ENCODE measurements at regions of chr17 and their contacts with region 1.

Region 1: GRCh38 chr17:8739097-8739496 is 5.5 kb downstream of the CCDC42 start:
- DNase-seq: no peak
- ATAC-seq: no peak
- H3K4me3 ChIP-seq: no peak overlapping the region
- H3K27ac ChIP-seq: no peak overlapping the region
- H3K4me1 ChIP-seq: no peaks in the 10 kb centered on the region
- H3K27me3 ChIP-seq: no peaks in the 10 kb centered on the region
- CTCF ChIP-seq: no peak
- POLR2A ChIP-seq: no peak

Region 2: DNA sequence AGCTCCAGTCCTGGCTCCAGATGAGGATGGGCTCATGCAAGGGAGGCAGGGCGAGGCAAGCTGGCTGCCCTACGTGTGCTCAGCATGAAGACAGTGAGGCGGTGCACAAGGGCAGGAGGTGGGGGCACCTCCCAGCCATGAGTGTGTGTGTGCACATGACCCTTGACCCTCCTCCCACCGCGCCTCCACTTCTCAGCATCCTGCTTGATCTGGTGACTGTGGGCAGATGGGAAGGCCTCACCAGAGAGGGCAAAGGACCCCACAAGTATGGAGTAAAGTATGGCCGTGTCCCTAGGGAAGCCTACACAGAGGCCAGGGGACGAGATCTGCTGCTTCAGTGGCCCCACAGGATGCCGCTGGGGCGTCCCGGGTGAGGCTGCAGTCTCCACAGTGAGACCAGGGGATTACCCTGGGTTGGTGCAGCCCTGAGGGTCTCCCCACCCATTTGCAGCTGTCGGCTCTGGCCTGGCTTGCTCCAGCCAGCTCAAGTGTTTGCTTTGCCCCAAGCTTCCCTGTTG is 333.5 kb before region 1 on chr17:
- intact Hi-C with region 1: loop called (anchors 2 kb)
- DNase-seq: no peak
- ATAC-seq: no peak
- H3K4me3 ChIP-seq: no peak overlapping the region
- H3K27ac ChIP-seq: no peak overlapping the region
- H3K4me1 ChIP-seq: peaks cover 6% of the 10 kb centered on the region
- H3K27me3 ChIP-seq: no peaks in the 10 kb centered on the region
- CTCF ChIP-seq: no peak
- POLR2A ChIP-seq: no peak

Region 3: DNA sequence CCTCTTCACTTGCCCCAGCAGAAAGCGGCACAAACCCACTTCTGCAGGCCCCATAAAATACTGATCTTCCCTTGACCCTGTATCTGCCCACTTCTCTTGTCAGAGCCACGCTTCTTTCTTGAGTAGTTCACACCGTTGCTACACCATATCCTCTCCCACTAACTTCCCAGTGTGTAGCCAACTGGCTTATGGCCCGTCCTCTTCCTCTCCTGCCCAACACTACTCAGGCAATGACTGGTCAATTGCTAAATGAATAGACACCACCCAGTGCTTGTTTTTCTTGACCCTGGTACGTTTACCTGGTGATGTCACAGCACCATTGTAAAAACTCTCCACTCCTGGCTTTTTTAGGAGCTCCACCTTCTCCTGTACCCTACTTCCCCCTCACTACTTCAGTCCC is 216.5 kb before region 1 on chr17:
- intact Hi-C with region 1: loop called (anchors 10 kb)
- DNase-seq: no peak
- ATAC-seq: no peak
- H3K4me3 ChIP-seq: no peak overlapping the region
- H3K27ac ChIP-seq: no peak overlapping the region
- H3K4me1 ChIP-seq: no peaks in the 10 kb centered on the region
- H3K27me3 ChIP-seq: no peaks in the 10 kb centered on the region
- CTCF ChIP-seq: no peak
- POLR2A ChIP-seq: no peak

Region 4: DNA sequence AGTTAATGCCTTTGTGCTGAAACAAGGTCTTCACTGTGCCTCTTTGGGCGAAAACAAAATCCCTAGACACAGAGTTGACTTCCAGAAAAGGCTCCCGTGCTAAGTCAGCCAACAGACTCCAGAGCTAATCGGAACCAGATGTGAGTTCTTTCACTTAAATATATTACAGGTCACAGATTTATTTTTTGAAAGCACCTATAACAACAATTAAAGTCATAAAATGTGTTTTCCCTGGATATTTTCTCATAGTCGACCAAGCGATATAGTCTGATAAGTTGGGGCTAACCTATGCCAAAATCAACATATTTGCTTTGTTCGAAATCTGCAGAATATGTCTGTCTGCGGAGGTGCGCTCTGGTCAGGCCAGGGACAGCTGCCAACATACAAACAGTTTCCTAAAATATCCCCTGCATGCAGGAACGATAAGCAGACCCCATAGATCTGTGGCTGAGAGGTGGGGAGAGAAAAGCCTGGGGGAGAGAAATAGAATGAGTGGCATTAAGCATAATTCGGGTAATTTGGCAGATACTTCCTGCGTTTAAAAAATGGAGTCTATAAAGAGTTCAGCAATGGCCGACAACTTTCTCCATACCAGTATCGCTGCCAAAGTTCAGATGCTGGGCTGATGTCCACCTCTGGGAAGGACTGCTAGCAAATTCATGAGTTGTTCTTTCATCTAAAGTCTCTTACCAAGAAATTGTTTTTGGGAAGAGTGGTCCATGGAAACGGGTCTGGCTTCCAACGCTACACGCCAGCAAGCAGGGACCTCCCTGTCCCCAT is 57.7 kb before region 1 on chr17:
- intact Hi-C with region 1: no loop called
- DNase-seq: no peak
- ATAC-seq: no peak
- H3K4me3 ChIP-seq: no peak overlapping the region
- H3K27ac ChIP-seq: no peak overlapping the region
- H3K4me1 ChIP-seq: peaks cover 12% of the 10 kb centered on the region
- H3K27me3 ChIP-seq: no peaks in the 10 kb centered on the region
- CTCF ChIP-seq: no peak
- POLR2A ChIP-seq: no peak

Region 5: GRCh38 chr17:8887834-8888703 is 149.0 kb after region 1 on chr17:
- intact Hi-C with region 1: no loop called
- DNase-seq: peak in 1 of 4 donors; percentile 23
- ATAC-seq: no peak
- H3K4me3 ChIP-seq: no peak overlapping the region
- H3K27ac ChIP-seq: no peak overlapping the region
- H3K4me1 ChIP-seq: no peaks in the 10 kb centered on the region
- H3K27me3 ChIP-seq: no peaks in the 10 kb centered on the region
- CTCF ChIP-seq: peak in 1 of 7 experiments; percentile 9
- POLR2A ChIP-seq: no peak